ENCODE measurements at regions of chr2 and their contacts with region 1.

Region 1: DNA sequence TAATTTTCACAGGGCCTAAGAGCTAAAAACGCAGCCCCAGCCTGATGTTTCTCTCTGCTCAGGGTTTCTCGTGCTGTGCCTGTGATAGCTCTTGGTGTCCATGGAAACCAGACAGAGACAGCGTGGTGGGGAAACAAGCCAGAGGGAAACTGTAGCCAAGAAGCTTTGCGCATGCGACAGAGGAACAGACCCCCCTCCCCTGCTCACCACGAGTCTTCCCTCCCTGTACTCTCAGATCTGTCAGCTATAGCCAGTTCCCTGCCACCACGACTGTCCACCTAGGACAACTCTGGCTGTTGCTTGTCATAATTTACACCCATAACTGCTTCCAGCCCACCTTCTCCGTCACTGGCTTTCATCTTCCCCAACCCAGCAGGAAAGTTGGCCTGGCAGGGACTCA is 13.2 kb upstream of the DNAJC27 start:
- DNase-seq: no peak
- H3K4me3 ChIP-seq: no peak overlapping the region
- H3K27ac ChIP-seq: no peak overlapping the region
- H3K4me1 ChIP-seq: peaks cover 0 to 13% (median 0%) of the 10 kb centered on the region in 6 donors
- H3K27me3 ChIP-seq: no peaks in the 10 kb centered on the region
- CTCF ChIP-seq: no peak
- POLR2A ChIP-seq: no peak

Region 2: DNA sequence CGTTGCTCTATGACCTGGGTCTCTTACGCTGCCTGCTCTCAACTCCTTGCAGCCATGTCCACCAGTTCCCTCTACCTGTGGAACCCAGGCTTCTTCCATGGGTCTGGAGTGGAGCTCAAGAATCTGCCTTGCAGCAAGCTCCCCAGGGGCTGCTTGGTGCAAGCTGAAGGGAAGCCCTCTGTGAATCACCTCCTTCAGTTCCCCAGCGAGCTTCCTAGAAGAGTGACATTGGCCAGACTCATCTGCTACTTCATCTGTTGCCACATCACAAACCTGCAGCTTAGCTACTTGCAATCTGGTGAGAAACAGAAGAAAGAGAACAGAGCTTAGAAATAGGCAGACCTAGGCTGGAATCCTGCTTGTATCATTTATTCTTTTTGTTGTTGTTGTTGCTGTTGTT is 47.2 kb after region 1 on chr2:
- intact Hi-C with region 1: loop called (anchors 10 kb)
- DNase-seq: no peak
- H3K4me3 ChIP-seq: no peak overlapping the region
- H3K27ac ChIP-seq: no peak overlapping the region
- H3K4me1 ChIP-seq: peaks cover 0 to 8% (median 0%) of the 10 kb centered on the region in 6 donors
- H3K27me3 ChIP-seq: no peaks in the 10 kb centered on the region
- CTCF ChIP-seq: no peak
- POLR2A ChIP-seq: no peak

Region 3: GRCh38 chr2:25794544-25795276 is 809.8 kb after region 1 on chr2:
- intact Hi-C with region 1: no loop called
- DNase-seq: no peak
- H3K4me3 ChIP-seq: peak overlapping the region in 3 of 8 donors; percentile 0 to 31 (median 1)
- H3K27ac ChIP-seq: peak overlapping the region; percentile 51 to 77 (median 62)
- H3K4me1 ChIP-seq: peaks cover 14 to 65% (median 20%) of the 10 kb centered on the region in 6 donors
- H3K27me3 ChIP-seq: no peaks in the 10 kb centered on the region
- CTCF ChIP-seq: no peak
- POLR2A ChIP-seq: no peak

Measured in spleen (tissue), 13 donors.